Activated CD8-positive, alpha-beta memory T cell treated with anti-CD3 and anti-CD28 coated beads, Interleukin-2, amount 10 ng/mL, durations not matched to agents 7 days and 5 days (primary cell): ENCODE measurements at regions of chr15 and their contacts with region 1.

Region 1: GRCh38 chr15:43204016-43204901 is 16.6 kb downstream of the EPB42 start:
- DNase-seq: peak; percentile 72
- ATAC-seq: peak; percentile 73
- H3K4me3 Mint-ChIP-seq: no peak overlapping the region
- H3K27ac Mint-ChIP-seq: no peak overlapping the region
- H3K4me1 Mint-ChIP-seq: peaks cover 17% of the 10 kb centered on the region
- H3K27me3 Mint-ChIP-seq: peaks cover 13% of the 10 kb centered on the region

Region 2: DNA sequence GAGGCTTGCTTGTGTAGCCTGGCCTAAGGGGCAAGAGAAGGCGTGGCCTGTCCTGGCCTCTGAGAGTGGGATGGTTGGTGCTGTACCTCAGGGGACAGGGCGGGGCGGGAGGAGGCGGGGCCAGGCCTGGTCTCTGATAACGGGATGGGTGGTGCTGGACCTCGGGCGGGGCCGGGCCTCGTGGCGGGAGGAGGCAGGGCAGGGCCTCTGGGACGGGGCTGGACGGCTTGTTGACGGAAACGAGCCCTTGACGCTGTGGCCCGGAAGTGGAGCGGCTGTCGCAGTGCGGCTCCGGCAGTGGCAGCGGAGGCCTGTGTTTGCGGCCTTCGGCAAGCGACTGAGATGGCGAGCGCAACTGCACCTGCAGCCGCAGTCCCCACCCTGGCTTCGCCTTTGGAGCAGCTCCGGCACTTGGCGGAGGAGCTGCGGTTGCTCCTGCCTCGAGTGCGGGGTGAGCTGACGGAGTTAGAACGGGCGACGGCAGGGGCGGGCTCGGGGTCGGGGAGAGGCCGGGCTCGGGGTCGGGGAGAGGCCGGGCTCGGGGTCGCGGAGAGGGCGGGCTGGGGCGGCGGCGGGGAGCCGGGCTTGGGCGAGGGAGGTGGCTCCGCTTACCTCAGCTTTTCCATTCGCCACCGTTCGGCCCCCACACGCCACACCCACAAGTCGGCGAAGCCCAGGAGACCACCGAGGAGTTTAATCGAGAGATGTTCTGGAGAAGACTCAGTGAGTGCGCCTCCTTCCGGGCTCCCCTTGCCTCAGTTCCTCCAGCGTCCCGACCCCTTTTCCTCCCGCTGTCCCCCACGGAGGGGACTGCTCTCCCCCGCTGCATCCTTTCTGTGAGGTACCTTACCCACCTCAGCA is 18.9 kb before region 1 on chr15 and contains the start of gene CCNDBP1:
- CTCF ChIA-PET with region 1: interaction called, 15 read pairs
- DNase-seq: peak; percentile 98
- ATAC-seq: peak; percentile 95
- H3K4me3 Mint-ChIP-seq: peak within 1 kb of the TSS; percentile 94
- H3K27ac Mint-ChIP-seq: peak within 1 kb of the TSS; percentile 96
- H3K4me1 Mint-ChIP-seq: peaks cover 38% of the 10 kb centered on the region
- H3K27me3 Mint-ChIP-seq: no peaks in the 10 kb centered on the region
- total RNA-seq, gene CCNDBP1: 60.5 to 78.4 TPM

Region 3: DNA sequence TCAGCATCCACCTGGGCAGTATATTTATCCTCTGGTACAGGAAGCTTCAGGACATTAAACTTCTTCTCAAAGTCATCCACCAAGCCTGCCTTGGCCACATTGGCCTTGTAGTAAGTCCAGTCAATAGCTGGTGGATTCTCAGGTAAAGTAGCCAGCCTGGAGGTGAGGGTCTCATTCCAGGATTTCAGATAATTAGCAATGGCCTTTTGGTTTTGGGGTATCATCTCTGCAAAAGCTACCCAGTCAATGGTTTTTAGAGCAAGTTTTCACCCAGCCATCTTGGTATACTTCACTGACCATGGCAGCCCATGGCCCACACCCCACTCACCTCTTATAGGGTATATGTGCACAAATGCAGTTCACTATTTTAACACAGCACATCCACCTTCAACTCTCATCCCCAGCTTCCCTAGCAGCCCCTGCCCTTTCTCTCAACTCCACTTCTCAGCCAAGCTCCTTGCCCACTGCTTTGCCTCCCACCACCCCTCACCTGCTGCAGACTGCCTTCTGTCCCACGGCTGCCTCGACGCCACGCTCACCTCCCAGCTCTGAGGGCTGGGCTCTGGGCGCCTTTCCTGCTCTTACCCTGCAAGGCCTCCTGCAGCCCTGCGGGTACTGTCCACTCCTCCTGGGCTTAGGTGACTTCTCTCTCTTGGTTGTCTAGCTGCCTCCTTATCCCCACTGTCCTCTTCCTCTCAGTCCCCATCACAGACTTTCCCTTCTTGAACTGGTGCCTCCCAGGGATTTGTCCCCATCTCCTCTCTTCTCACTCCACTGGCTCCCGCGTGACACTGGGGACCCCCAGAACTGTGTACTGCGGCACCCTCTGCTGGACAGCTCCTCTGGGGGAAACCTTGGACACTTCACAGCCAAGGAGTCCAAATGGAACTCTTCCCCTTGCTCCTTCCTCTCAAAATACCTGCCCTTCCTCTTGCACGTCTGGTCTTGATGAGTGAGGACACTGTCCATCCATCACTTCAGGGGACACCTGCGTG is 64.1 kb after region 1 on chr15:
- CTCF ChIA-PET with region 1: interaction called, 12 read pairs
- DNase-seq: peak; percentile 61
- ATAC-seq: no peak
- H3K4me3 Mint-ChIP-seq: no peak overlapping the region
- H3K27ac Mint-ChIP-seq: no peak overlapping the region
- H3K4me1 Mint-ChIP-seq: peaks cover 9% of the 10 kb centered on the region
- H3K27me3 Mint-ChIP-seq: peaks cover 47% of the 10 kb centered on the region